Right lobe of liver (tissue), 6 donors: ENCODE measurements at regions of chr20 and their contacts with region 1.

Region 1: DNA sequence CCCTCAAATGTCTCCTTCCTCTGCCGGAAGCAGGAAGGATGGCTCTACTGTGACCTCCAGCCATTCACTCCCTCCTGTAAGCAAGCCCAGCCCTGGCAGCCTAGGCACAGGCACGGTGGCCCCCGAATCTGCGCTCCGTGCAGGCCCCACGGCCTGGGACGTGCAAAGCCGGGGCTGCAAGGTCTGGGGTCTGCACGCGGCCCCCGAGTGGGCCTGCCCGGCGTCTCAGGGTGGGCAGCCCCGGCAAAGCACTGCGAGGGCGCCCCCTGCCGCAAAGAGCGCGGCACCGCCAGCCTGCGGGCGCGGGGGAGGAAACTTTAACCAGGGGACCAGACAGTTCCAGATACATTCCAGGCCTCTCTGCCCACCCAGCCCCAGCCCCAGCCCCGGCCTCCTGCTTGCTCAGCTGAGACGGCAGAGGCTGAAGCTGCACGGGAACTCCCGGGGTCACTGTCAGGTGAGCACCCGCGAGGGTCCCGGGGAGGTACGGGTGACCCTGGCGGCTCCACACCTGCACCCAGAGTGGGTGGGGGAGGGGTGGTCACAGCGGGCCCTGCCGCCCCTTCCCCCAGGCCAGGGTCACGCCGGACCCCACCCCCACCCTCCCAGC is 98.8 kb downstream of the ASXL1 start:
- DNase-seq: peak in 1 of 3 donors; percentile 53
- ATAC-seq: peak; percentile 41 to 69 (median 54)
- H3K4me3 ChIP-seq: peak overlapping the region; percentile 18 to 32 (median 20)
- H3K27ac ChIP-seq: no peak overlapping the region
- H3K4me1 ChIP-seq: peaks cover 0 to 3% (median 0%) of the 10 kb centered on the region in 4 donors
- H3K27me3 ChIP-seq: no peaks in the 10 kb centered on the region
- CTCF ChIP-seq: peak; percentile 54 to 71 (median 59)
- POLR2A ChIP-seq: no peak

Region 2: DNA sequence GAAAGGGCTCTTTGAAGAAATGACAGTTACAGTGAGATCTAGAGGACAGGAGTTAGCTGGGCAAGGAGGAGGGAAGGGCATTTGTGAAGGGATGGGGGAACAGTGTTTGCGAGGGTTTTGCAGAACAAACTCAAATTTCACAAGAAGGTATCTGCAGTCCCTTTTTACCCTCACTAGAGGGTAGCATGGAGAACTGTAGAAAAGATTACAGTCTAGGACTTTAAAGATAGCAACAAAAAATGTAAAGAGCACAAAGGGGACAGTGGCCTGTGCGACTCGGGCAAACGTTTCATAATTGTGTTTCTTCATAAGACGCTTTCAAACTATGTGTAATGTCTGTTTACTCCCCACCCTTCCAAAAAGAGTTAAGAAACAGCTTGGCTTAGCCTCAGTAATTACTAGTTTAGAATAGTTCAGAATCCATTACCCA is 120.0 kb before region 1 on chr20:
- intact Hi-C with region 1: loop called in 1 of 2 experiments (anchors 10 kb)
- DNase-seq: no peak
- ATAC-seq: peak; percentile 69 to 78 (median 76)
- H3K4me3 ChIP-seq: no peak overlapping the region
- H3K27ac ChIP-seq: no peak overlapping the region
- H3K4me1 ChIP-seq: peaks cover 0 to 10% (median 2%) of the 10 kb centered on the region in 4 donors
- H3K27me3 ChIP-seq: no peaks in the 10 kb centered on the region
- CTCF ChIP-seq: peak; percentile 60 to 67 (median 62)
- POLR2A ChIP-seq: no peak

Region 3: GRCh38 chr20:32357869-32358631 is 98.9 kb before region 1 on chr20 and contains the start of gene ASXL1:
- intact Hi-C with region 1: loop called in 1 of 2 experiments (anchors 10 kb)
- DNase-seq: peak; percentile 99
- ATAC-seq: peak; percentile 89 to 97 (median 92)
- H3K4me3 ChIP-seq: peak within 1 kb of the TSS; percentile 87 to 96 (median 92)
- H3K27ac ChIP-seq: peak within 1 kb of the TSS; percentile 94 to 97 (median 96)
- H3K4me1 ChIP-seq: peaks cover 0 to 31% (median 9%) of the 10 kb centered on the region in 4 donors
- H3K27me3 ChIP-seq: no peaks in the 10 kb centered on the region
- CTCF ChIP-seq: no peak
- POLR2A ChIP-seq: peak; percentile 39
- total RNA-seq, gene ASXL1: 18.9 to 41.8 (median 26.0) TPM